PC-9 (cell line): ENCODE measurements at regions of chr7 and their contacts with region 1.

Region 1: DNA sequence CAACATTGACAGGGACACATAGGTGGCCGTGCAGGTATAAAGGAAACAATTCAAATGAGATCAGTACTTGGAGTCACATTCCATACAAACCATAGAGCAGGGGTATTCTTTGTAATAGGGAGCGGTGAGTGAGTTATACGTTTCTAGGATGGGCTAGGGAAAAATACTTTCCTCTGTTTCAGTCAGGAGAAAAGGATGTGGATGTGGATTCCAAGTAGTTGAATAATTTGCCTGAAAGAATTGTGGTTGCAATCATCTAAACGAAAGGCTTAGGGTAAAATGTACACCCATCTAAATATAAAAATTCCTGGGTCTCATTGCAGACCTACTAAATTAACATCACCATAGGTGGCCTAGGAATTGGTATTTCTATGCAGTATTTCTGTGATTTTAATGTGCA is 270.7 kb upstream of the IGFBP3 start:
- DNase-seq: peak; percentile 62 to 93
- H3K4me3 ChIP-seq: no peak overlapping the region
- H3K27ac ChIP-seq: peak overlapping the region; percentile 88
- H3K4me1 ChIP-seq: peaks cover 25% of the 10 kb centered on the region
- H3K27me3 ChIP-seq: no peaks in the 10 kb centered on the region
- CTCF ChIP-seq: no peak

Region 2: GRCh38 chr7:45978010-45978681 is 213.6 kb before region 1 on chr7:
- CTCF ChIA-PET with region 1: no interaction called
- POLR2A ChIA-PET with region 1: no interaction called
- intact Hi-C with region 1: loop called (anchors 1 kb)
- DNase-seq: peak; percentile 91 to 100
- H3K4me3 ChIP-seq: peak overlapping the region; percentile 23; the same call in 1 of the 2 replicates
- H3K27ac ChIP-seq: peak overlapping the region; percentile 97
- H3K4me1 ChIP-seq: peaks cover 52% of the 10 kb centered on the region
- H3K27me3 ChIP-seq: no peaks in the 10 kb centered on the region
- CTCF ChIP-seq: no peak

Region 3: DNA sequence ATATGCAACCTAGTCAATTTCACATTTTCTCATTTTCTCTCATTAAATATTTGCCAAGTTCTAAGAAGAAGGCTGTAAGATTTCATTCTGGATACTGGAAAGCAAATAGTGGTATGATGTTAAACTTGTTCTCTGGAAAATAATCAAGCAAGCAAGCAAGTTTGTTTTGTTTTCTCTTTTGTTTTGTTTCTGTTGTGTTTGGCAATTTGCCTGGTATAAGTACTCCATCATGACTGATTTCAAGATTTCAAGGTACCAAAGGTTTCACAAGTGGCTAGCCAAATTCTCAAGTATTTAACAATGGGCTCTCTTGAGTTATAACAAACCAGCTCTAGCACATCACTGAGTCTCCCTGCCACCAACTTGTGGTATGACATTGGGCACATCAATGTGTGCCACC is 119.1 kb before region 1 on chr7:
- CTCF ChIA-PET with region 1: no interaction called
- POLR2A ChIA-PET with region 1: no interaction called
- intact Hi-C with region 1: loop called (anchors 5 kb)
- DNase-seq: peak; percentile 14 to 84
- H3K4me3 ChIP-seq: no peak overlapping the region
- H3K27ac ChIP-seq: peak overlapping the region; percentile 28
- H3K4me1 ChIP-seq: peaks cover 28% of the 10 kb centered on the region
- H3K27me3 ChIP-seq: no peaks in the 10 kb centered on the region
- CTCF ChIP-seq: no peak

Region 4: GRCh38 chr7:46145412-46145811 is 46.4 kb before region 1 on chr7:
- CTCF ChIA-PET with region 1: no interaction called
- POLR2A ChIA-PET with region 1: no interaction called
- intact Hi-C with region 1: loop called (anchors 1 kb)
- DNase-seq: peak; percentile 89 to 99
- H3K4me3 ChIP-seq: no peak overlapping the region
- H3K27ac ChIP-seq: peak overlapping the region; percentile 80
- H3K4me1 ChIP-seq: peaks cover 29% of the 10 kb centered on the region
- H3K27me3 ChIP-seq: no peaks in the 10 kb centered on the region
- CTCF ChIP-seq: no peak

Region 5: DNA sequence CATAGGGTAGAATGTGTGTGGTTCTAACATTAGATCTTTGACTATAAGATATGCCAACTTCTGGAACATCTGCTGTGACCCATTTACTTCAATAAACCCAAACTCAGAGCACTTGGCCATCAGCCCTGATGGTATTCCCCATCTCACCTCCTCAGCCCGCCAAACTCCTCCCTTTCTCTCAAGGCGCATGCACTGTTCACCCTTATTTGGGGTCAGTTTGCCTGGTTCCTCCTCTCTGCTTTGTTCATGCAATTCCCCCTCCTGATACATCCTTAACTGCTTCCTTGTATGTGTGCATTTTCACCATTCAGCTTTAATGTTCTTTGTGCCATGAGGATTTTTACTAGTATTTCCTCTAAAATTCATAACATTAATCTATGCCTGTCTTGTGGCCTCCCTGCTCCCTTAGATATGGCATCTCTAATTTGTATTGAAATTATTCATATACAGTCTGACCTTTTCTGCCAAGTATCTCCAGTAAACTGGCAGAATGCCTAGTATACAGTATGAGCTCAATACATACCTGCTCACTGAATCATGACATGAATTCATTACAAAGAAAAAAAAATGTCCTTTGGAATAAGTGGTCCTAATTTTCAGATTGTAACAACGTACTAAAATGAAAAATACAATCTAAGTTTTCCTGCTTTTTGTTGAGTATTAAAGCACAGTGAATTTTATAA is 66.1 kb after region 1 on chr7:
- CTCF ChIA-PET with region 1: no interaction called
- POLR2A ChIA-PET with region 1: no interaction called
- intact Hi-C with region 1: loop called (anchors 2 kb)
- DNase-seq: peak; percentile 41 to 87
- H3K4me3 ChIP-seq: no peak overlapping the region
- H3K27ac ChIP-seq: peak overlapping the region; percentile 12; the same call in 1 of the 2 replicates
- H3K4me1 ChIP-seq: peaks cover 23% of the 10 kb centered on the region
- H3K27me3 ChIP-seq: no peaks in the 10 kb centered on the region
- CTCF ChIP-seq: no peak

Region 6: GRCh38 chr7:46544374-46545008 is 352.7 kb after region 1 on chr7:
- CTCF ChIA-PET with region 1: no interaction called
- POLR2A ChIA-PET with region 1: no interaction called
- intact Hi-C with region 1: loop called (anchors 5 kb)
- DNase-seq: peak; percentile 34 to 84
- H3K4me3 ChIP-seq: no peak overlapping the region
- H3K27ac ChIP-seq: peak overlapping the region; percentile 67
- H3K4me1 ChIP-seq: peaks cover 30% of the 10 kb centered on the region
- H3K27me3 ChIP-seq: no peaks in the 10 kb centered on the region
- CTCF ChIP-seq: no peak